Activated T-helper 1 cell treated with anti-CD3 and anti-CD28 coated beads, Interleukin-12 subunit alpha, Interleukin-12 subunit beta, Interleukin-2, Interleukin-4 antibody, amounts not matched to agents 30 ng/mL and 10 ng/mL and 1 ng/mL, durations not matched to agents 14 hours and 24 hours and 36 hours (primary cell): ENCODE measurements at regions of chr2 and their contacts with region 1.

Region 1: DNA sequence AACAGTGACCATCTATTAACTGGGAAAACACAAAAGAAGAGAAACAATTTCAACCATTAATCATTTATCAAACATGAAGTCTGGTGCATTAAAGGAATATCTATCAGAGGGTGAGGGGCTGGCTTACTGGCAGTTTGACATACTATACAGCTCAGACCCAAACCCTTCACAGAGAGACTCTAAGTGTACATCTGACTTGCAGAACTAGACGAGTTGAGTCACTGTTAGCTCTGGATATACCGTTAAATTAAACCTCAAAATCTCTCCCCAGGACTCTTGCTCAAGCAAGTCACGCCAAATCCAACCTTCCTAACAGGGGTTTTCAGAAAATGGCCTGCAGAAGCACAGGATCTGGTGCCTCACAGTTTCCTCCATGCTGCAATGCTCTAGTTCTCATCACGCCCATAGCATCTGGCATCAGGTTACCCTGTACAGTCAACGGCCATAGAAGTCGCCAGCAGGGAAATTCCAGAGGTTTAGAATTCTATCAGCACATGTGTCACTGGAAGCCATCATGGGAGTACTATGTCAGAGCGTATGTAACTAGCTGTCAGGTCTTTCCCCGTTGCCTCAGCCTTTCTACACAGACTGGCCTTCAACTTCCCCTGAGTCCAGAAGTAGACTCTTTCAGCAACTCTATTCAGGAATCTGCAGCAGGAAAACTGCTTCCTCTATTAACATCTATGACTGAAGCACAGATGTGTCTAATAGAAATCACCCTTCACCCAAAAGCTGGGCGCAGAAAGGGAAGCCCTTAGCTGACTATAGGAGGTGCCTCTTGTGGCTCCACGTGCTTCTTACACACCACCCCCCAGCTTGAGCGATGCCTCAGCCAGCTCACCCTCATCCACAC is 9.3 kb downstream of the TGOLN2 start:
- DNase-seq: no peak
- H3K4me3 Mint-ChIP-seq: peak overlapping the region; percentile 27
- H3K27ac Mint-ChIP-seq: peak overlapping the region; percentile 80
- H3K4me1 Mint-ChIP-seq: peaks cover 58% of the 10 kb centered on the region
- H3K27me3 Mint-ChIP-seq: no peaks in the 10 kb centered on the region

Region 2: DNA sequence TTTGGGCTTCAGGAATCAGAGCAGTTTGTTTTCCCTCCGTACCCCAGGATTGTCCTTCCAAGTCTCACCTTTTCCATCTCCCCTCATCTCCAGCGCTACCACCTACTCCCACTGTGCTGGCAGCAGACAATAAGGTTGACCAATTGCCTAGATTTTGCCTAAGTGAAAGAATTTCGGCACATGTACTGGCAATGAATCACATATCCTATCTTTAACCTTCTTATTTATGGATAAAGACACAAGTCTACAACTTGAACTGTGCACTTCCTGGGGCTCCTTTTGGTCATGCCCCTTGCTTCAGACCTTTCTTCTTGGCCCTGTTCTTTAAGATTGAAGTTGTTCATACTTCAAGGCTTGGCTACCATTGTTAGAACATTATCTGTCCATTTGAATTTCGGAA is 276.1 kb before region 1 on chr2:
- intact Hi-C with region 1: no loop called
- DNase-seq: no peak
- H3K4me3 Mint-ChIP-seq: no peak overlapping the region
- H3K27ac Mint-ChIP-seq: no peak overlapping the region
- H3K4me1 Mint-ChIP-seq: no peaks in the 10 kb centered on the region
- H3K27me3 Mint-ChIP-seq: no peaks in the 10 kb centered on the region

Region 3: DNA sequence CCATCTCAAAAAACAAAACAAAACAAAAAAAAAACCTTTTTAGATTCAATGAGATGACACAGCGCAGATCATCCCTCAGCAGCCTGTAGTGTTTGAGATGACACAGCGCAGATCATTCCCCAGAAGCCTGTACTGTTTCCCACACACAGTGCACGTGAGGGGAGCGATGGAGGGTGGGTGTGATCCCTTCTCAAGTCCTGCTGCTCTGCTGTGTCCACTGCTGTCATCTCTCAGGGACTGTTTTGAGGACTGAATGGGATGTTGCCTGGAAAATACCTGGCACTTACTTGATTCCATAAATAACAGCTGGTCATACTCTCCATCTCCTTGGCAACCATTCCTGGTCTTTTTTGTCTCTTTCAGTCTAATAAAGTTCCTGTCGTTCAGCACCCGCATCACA is 16.3 kb before region 1 on chr2:
- intact Hi-C with region 1: no loop called
- DNase-seq: no peak
- H3K4me3 Mint-ChIP-seq: no peak overlapping the region
- H3K27ac Mint-ChIP-seq: no peak overlapping the region
- H3K4me1 Mint-ChIP-seq: peaks cover 7% of the 10 kb centered on the region
- H3K27me3 Mint-ChIP-seq: peaks cover 16% of the 10 kb centered on the region

Region 4: DNA sequence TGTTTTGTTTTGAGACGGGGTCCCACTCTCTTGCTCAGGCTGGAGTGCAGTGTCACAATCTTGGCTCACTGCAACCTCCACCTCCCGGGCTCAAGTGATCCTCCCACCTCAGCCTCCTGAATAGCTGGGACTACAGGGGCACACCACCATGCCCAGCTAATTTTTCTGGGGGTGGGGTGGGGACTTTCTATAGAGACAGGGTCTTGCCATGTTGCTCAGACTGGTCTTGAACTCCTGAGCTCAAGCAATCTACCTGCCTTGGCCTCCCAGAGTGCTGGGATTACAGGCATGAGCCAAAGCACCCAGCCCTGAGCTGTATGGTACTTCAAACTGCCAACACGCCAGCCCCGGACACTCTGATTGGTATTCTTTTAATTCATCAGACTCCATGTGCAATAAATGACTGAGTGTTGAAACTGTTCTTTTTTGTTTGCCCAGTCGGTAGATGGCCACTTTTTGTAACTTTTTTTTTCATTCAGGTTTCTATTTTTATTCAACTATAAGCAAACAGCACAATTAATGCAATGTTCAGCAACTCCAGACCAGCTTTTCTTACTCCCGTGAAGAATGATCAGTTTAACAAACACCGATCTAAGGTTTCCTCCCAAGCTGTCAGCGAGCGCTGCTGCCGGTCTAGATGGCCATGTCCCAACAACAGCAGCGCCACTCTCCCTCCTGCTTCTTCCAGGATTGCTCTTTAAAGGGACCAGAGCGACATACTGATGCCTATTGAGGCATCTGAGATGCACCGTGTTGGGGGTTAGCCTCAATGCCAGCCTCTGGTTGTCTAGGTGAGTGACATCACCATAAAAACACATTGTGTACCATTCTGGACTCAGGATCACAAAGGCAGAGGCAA is 21.8 kb after region 1 on chr2:
- intact Hi-C with region 1: loop called (anchors 1 kb)
- DNase-seq: no peak
- H3K4me3 Mint-ChIP-seq: no peak overlapping the region
- H3K27ac Mint-ChIP-seq: no peak overlapping the region
- H3K4me1 Mint-ChIP-seq: no peaks in the 10 kb centered on the region
- H3K27me3 Mint-ChIP-seq: peaks cover 16% of the 10 kb centered on the region